ENCODE measurements at regions of chr12 and their contacts with region 1.

Region 1: GRCh38 chr12:66441900-66442559 is 139.7 kb downstream of the HELB start:
- DNase-seq: no peak
- CTCF ChIP-seq: no peak

Region 2: DNA sequence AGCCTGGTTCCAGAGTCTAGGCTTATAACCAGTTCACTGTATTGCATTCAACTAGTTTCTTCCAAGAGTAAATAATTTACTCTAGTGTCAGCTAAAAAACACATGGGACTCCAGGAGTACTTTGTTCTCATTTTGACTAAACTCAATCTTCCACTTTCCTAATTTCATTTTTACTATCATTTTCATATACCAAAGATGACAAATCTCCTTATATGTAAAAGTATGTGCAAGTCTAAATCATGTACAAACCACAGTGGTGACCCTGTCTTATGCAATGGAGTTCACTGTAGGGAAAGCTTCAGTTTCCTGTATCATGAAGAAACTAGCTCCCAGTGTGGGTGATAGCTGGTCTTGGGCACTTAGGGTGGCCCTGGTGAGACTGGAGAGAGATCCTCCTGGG is 11.8 kb after region 1 on chr12:
- CTCF ChIA-PET with region 1: interaction called, 12 read pairs
- POLR2A ChIA-PET with region 1: no interaction called
- DNase-seq: no peak
- CTCF ChIP-seq: no peak

Region 3: DNA sequence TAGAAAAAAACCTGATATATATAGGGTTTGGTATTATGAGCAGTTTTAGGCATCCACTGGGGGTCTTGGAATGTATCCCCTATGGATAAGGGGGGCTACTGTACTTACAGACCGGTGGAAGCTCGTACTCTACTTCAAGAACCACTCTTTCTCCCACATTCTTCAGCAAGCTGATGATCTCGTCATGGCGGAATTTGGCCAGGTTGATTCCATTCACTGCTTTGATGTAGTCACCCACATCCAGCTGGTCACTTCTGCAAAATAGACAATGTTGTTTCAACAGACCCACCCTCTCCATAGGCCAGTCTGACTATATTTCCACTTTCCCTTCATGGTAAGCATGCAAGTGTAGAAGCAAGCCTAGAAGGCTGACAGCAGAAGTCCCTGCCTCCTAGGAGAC is 96.9 kb after region 1 on chr12:
- CTCF ChIA-PET with region 1: no interaction called
- POLR2A ChIA-PET with region 1: no interaction called
- DNase-seq: no peak
- CTCF ChIP-seq: no peak